ENCODE measurements at regions of chr18 and their contacts with region 1.

Region 1: DNA sequence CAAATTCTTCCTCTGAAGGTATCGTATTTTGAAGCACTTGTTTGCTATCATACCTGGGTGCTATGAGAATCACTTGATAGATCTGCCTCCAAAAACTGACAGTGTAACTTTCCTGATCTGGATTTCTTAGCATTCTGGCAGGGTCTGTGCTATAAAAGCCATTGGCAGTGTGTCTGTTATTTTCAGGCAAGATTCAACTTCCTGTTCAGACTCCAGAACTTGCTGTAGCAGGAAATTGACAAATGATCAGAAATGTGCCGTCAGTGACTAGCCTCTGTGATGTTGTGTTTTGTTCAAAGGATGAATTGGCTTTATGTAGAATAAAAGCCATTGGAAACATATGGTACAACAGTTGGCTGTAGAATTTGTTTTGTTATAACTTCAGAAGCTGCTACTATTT is 273.3 kb downstream of the PTPRM start:
- DNase-seq: no peak
- H3K4me3 Mint-ChIP-seq: no peak overlapping the region
- H3K27ac Mint-ChIP-seq: no peak overlapping the region
- H3K4me1 Mint-ChIP-seq: no peaks in the 10 kb centered on the region
- H3K27me3 Mint-ChIP-seq: no peaks in the 10 kb centered on the region

Region 2: GRCh38 chr18:6835345-6835744 is 1005.1 kb before region 1 on chr18:
- CTCF ChIA-PET with region 1: no interaction called
- intact Hi-C with region 1: no loop called
- DNase-seq: no peak
- H3K4me3 Mint-ChIP-seq: no peak overlapping the region
- H3K27ac Mint-ChIP-seq: no peak overlapping the region
- H3K4me1 Mint-ChIP-seq: no peaks in the 10 kb centered on the region
- H3K27me3 Mint-ChIP-seq: no peaks in the 10 kb centered on the region

Region 3: GRCh38 chr18:7872569-7872968 is 32.2 kb after region 1 on chr18:
- CTCF ChIA-PET with region 1: no interaction called
- intact Hi-C with region 1: loop called (anchors 1 kb)
- DNase-seq: no peak
- H3K4me3 Mint-ChIP-seq: no peak overlapping the region
- H3K27ac Mint-ChIP-seq: no peak overlapping the region
- H3K4me1 Mint-ChIP-seq: no peaks in the 10 kb centered on the region
- H3K27me3 Mint-ChIP-seq: no peaks in the 10 kb centered on the region

Region 4: DNA sequence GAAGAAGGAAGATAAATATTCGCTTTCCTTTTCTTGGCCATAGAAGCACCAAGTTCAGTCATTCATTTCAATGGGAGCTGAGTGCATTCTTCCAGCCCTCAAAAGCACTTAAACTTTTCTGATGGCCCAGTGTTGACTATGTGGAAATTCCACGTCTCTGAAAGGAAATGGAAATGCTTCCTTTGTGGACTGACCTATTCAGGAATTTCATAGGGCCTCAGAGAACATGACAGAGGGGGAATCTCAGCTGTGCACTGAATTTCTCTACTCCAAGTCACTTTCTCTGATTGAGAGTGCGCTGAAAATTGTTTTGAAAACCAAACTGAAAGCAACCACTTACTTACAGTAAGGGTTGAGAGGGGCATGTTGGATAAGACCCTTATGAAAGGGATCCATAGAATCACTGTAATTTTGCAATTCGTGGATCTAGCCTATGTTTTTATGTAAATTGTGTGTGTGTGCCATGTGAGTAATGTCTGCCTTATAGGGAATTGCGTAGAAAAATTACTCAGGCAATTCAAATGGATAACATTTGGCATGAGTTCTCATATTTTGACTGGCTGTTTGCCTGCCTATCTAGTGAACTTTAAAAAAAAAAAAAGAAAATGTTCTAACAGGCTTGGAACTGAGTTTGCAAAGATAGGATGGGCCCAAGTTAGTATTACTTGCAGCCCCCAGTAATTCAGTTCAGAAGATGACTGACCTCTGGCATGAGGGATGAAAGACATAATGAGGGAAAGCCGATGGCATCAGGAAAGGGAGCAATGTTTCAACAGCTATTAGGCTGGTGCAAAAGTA is 163.7 kb after region 1 on chr18:
- CTCF ChIA-PET with region 1: no interaction called
- intact Hi-C with region 1: no loop called
- DNase-seq: no peak
- H3K4me3 Mint-ChIP-seq: no peak overlapping the region
- H3K27ac Mint-ChIP-seq: no peak overlapping the region
- H3K4me1 Mint-ChIP-seq: no peaks in the 10 kb centered on the region
- H3K27me3 Mint-ChIP-seq: no peaks in the 10 kb centered on the region